Esophagus muscularis mucosa (tissue), 4 donors: ENCODE measurements at regions of chr1 and their contacts with region 1.

Region 1: GRCh38 chr1:81998165-81998564 is 197.4 kb downstream of the ADGRL2 start:
- DNase-seq: no peak
- H3K4me3 ChIP-seq: peak overlapping the region in 1 of 4 donors; percentile 1
- H3K27ac ChIP-seq: peak overlapping the region in 2 of 4 donors; percentile 2 to 26
- H3K4me1 ChIP-seq: peaks cover 5 to 23% (median 17%) of the 10 kb centered on the region in 4 donors
- H3K27me3 ChIP-seq: no peaks in the 10 kb centered on the region
- CTCF ChIP-seq: no peak
- EP300 ChIP-seq: no peak
- POLR2A ChIP-seq: no peak

Region 2: DNA sequence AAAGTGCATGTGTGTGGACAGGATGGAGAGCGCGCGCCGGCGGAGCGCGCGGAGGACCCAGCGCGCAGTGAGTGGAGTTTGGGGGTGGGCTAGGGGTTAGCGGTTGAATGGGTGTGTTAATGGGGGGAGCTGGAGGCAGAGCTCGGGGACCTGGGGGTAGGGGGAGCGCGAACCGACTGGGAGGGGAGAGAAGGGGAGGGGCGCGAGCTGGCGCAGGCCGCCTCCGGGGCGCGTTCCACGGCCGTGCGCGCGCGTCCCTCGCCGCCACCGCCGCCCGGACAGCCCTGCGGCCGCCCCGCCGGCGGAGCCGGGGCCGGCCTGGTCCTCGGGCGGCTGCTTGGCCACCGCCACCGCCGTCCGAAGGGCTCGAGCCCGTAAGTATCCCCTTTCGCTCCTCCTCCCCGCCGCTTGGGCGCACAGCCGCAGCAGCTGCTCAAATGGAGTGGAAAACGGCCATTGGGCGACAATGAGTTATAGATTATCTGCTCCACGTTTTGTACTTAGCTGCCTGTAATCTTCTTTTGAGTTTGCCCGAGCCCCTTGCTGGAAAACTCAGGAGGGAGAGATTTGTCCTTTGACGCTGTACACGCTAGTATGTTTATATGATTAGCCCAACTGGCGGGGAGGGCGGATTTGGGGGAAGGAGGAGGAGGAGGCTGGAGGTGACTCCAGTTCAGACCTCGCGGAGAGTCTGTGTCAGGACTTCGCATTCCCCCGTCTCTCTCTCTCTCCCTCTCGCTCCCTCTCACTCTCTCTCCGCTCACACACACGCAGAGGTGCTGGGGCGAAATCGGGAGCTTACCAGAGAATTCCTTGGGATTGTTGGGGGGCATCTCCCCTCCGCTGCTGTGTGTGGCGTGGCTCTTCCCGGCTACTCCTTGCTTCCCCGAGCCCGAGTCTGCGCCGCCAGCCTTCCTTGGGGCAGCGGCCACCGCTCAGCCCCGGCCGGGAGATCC is 197.2 kb before region 1 on chr1 and contains the start of gene ADGRL2:
- intact Hi-C with region 1: loop called (anchors 10 kb)
- DNase-seq: peak; percentile 93
- H3K4me3 ChIP-seq: peak within 1 kb of the TSS; percentile 84 to 91 (median 87)
- H3K27ac ChIP-seq: peak within 1 kb of the TSS; percentile 94 to 98 (median 95)
- H3K4me1 ChIP-seq: peaks cover 23 to 33% (median 29%) of the 10 kb centered on the region in 4 donors
- H3K27me3 ChIP-seq: no peaks in the 10 kb centered on the region
- CTCF ChIP-seq: no peak
- EP300 ChIP-seq: no peak
- POLR2A ChIP-seq: peak; percentile 23
- total RNA-seq, gene ADGRL2: 72.4 to 89.7 (median 78.8) TPM

Region 3: DNA sequence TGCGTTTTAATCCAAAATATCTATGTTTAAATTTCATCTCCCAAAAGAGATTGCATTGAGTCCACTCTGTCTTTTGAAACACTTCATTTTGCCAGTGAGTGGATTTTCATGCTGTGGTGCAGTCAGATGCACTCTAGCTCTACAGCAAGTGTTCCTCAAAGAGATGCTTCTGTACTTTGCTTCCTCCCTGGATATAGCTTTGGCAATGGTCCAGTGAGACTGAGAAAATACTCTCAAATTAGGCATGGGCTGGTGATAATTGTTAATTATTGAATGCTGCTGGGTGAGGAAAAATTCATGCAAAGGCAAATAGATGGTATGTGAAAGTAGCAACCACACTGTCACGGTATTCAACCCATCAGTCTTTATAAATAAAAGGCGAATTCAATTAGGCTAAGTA is 199.4 kb after region 1 on chr1:
- intact Hi-C with region 1: no loop called
- DNase-seq: no peak
- H3K4me3 ChIP-seq: no peak overlapping the region
- H3K27ac ChIP-seq: no peak overlapping the region
- H3K4me1 ChIP-seq: no peaks in the 10 kb centered on the region
- H3K27me3 ChIP-seq: no peaks in the 10 kb centered on the region
- CTCF ChIP-seq: no peak
- EP300 ChIP-seq: no peak
- POLR2A ChIP-seq: no peak